Naive thymus-derived CD8-positive, alpha-beta T cell (primary cell): ENCODE measurements at regions of chr5 and their contacts with region 1.

Region 1: GRCh38 chr5:132446669-132447068 is 43.9 kb downstream of the IRF1 start:
- DNase-seq: no peak
- ATAC-seq: peak in 1 of 2 donors; percentile 40
- H3K4me3 Mint-ChIP-seq: peak overlapping the region; percentile 6 to 74 (median 48)
- H3K27ac Mint-ChIP-seq: peak overlapping the region in 8 of 10 donors; percentile 25 to 89 (median 68)
- H3K4me1 Mint-ChIP-seq: peaks cover 47 to 91% (median 84%) of the 10 kb centered on the region in 4 donors
- H3K27me3 Mint-ChIP-seq: no peaks in the 10 kb centered on the region

Region 2: DNA sequence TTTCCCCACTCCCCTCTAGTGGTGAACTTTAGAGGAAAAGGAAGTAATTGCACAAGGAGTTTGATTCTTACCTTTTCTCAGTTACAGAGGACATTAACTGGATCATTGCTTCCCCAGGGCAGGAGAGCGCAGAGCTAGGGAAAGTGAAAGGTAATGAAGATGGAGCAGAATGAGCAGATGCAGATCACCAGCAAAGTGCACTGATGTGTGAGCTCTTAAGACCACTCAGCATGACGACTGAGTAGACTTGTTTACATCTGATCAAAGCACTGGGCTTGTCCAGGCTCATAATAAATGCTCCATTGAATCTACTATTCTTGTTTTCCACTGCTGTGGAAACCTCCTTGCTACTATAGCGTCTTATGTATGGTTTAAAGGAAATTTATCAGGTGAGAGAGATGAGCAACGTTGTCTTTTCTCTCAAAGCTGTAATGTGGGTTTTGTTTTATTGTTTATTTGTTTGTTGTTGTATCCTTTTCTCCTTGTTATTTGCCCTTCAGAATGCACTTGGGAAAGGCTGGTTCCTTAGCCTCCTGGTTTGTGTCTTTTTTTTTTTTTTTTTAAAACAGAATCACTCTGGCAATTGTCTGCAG is 51.9 kb before region 1 on chr5:
- POLR2A ChIA-PET with region 1: no interaction called
- DNase-seq: no peak
- ATAC-seq: peak in 1 of 2 donors; percentile 37
- H3K4me3 Mint-ChIP-seq: peak overlapping the region in 4 of 10 donors; percentile 2 to 14 (median 9)
- H3K27ac Mint-ChIP-seq: peak overlapping the region in 9 of 10 donors; percentile 48 to 92 (median 80)
- H3K4me1 Mint-ChIP-seq: peaks cover 24 to 71% (median 62%) of the 10 kb centered on the region in 4 donors
- H3K27me3 Mint-ChIP-seq: no peaks in the 10 kb centered on the region

Region 3: DNA sequence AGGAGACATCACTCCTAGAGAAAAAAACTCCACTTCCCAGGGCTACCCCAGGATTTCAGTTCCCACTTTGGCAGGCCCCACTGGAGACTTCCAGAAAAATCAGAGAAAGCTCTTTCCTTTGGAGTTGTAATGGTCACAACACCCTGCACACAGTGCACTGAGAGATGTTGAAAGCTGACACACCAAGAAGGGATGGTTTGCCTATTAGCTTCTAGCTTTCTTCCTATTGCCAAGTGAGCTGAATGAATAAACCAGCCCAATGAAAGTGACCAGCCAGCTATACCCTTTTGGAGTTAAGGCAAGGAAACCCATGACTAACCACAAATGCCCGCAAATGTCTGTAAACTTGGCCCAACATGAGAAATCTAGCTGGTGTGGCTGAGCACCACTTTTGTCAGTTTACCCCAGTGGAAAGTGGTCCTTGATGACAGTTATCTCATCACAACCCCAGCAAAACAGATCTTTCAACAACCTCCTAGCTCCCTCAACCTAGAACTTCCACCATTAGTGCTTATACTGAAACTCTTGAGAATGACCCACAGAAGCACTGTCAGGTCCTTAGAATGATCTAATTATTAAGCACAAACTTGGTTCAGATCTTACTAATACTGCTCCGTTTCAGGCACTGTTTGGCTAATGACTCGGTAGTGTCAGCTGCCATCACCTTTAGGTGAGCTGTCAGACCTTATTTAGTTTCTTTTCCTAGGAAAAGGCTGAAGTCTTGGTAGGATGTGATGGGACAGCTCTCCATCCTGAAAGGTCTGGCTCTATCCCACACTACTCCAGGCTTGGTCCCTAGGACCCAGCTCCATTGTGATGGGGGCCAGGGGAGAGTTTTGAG is 32.7 kb after region 1 on chr5:
- POLR2A ChIA-PET with region 1: interaction called, 17 read pairs
- DNase-seq: no peak
- ATAC-seq: no peak
- H3K4me3 Mint-ChIP-seq: peak overlapping the region in 3 of 10 donors; percentile 4 to 53 (median 43)
- H3K27ac Mint-ChIP-seq: peak overlapping the region; percentile 83 to 98 (median 92)
- H3K4me1 Mint-ChIP-seq: peaks cover 38 to 89% (median 83%) of the 10 kb centered on the region in 4 donors
- H3K27me3 Mint-ChIP-seq: no peaks in the 10 kb centered on the region